ENCODE measurements at regions of chr4 and their contacts with region 1.

Region 1: DNA sequence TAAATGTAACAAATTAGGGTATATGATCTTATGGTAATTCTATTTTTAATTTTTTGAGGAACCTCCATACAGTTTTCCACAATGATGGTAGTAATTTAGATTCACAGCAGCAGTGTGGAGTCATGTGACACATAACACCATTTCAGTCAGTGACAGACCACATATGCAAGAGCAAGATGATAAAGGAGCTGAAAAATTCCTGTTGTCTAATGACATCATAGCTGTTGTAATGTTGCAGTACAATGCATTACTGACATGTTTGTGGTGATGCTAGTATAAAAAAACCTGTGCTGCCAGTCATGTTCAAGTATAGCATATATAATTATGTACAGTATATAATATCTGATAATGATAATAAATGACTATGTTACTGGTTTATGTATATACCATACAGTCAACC is 28.5 kb downstream of the EMCN start:
- DNase-seq: no peak
- H3K4me3 ChIP-seq: no peak overlapping the region
- H3K27ac ChIP-seq: no peak overlapping the region
- H3K4me1 ChIP-seq: no peaks in the 10 kb centered on the region
- H3K27me3 ChIP-seq: no peaks in the 10 kb centered on the region
- CTCF ChIP-seq: no peak
- POLR2A ChIP-seq: no peak

Region 2: DNA sequence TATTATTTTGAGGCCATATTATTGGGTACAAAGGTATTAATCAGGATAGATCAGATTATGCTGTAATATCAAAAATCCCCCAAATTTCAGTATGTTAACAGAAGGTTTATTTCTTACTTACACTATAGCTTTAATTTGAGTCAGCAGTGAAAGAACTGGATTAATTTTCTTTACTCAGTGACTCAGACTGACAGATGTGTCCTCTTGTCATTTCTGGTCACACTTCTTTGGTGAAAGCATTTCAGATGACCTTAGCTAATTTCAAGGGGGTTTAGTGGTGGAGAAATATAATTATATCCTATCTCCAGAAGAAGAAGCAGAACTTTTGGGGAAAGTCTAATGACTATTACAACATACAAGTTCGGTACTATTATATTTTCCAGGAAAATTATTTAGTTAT is 311.5 kb before region 1 on chr4:
- intact Hi-C with region 1: no loop called
- DNase-seq: no peak
- H3K4me3 ChIP-seq: no peak overlapping the region
- H3K27ac ChIP-seq: no peak overlapping the region
- H3K4me1 ChIP-seq: no peaks in the 10 kb centered on the region
- H3K27me3 ChIP-seq: no peaks in the 10 kb centered on the region
- CTCF ChIP-seq: no peak
- POLR2A ChIP-seq: no peak

Region 3: GRCh38 chr4:100533741-100534140 is 44.4 kb after region 1 on chr4:
- intact Hi-C with region 1: loop called (anchors 2 kb)
- DNase-seq: no peak
- H3K4me3 ChIP-seq: no peak overlapping the region
- H3K27ac ChIP-seq: no peak overlapping the region
- H3K4me1 ChIP-seq: no peaks in the 10 kb centered on the region
- H3K27me3 ChIP-seq: no peaks in the 10 kb centered on the region
- CTCF ChIP-seq: no peak
- POLR2A ChIP-seq: no peak